Natural killer cell (primary cell): ENCODE measurements at regions of chr7 and their contacts with region 1.

Region 1: DNA sequence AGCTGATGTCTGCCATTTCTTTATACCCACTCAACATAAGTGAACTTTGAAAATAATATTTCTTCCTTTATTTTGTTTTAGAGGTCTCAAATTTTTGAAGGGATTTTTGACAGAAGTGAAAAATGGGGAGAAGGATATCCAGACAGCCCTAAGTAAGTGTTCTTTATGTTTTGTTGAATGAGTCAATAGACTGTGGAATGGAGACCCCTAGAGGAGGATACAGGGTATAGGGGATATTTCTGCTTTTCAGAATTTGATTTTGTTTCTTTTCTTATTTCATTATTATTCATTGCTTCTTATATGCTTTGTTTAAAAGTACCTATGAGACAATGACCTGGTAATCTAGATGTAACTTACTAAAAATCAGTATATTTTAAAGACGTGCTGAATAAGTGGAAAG is 34.4 kb downstream of the PLEKHA8 start:
- DNase-seq: peak in 1 of 2 donors; percentile 52
- ATAC-seq: peak; percentile 57 to 69 (median 64)
- H3K4me3 ChIP-seq: no peak overlapping the region
- H3K4me3 Mint-ChIP-seq: no peak overlapping the region
- H3K27ac ChIP-seq: no peak overlapping the region
- H3K27ac Mint-ChIP-seq: no peak overlapping the region
- H3K4me1 ChIP-seq: no peaks in the 10 kb centered on the region
- H3K4me1 Mint-ChIP-seq: peaks cover 0 to 10% of the 10 kb centered on the region in 2 donors
- H3K27me3 ChIP-seq: no peaks in the 10 kb centered on the region
- H3K27me3 Mint-ChIP-seq: no peaks in the 10 kb centered on the region
- CTCF ChIP-seq: peak; percentile 61

Region 2: DNA sequence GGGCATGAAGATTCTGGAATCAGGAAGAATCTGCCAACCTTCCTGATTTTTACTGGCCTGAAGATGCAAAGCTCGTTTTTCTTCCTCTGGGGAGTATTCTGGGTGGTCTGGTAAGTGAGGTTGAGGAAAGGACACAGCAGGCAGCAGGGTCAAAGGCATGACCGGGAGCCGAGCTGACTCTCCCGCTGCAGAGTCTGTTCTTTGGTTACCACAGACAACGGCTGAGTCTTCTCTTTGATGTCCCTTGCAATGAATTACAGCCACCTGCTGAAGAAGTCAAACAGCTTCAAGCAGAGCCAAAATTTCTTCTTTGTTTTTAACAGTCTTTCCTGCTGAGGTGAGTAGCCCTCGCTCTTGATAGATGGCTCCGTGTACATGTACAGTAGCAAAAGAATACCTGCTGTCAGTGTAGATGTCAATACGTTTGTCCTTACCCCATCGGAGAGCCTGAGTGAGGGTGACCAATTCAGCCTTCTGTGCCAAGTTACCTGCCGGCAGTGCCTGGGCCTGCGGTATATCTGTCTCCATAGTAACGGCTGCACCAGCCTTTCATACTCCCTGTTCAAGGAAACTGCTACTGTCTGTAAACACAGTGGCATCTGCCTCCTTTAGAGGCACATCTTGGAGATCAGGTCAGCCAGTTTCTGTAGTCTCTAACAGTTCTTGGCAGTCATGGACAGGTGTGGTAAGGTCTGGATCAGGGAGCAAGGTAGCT is 422.6 kb before region 1 on chr7:
- intact Hi-C with region 1: loop called (anchors 5 kb)
- DNase-seq: no peak
- ATAC-seq: no peak
- H3K4me3 ChIP-seq: no peak overlapping the region
- H3K4me3 Mint-ChIP-seq: no peak overlapping the region
- H3K27ac ChIP-seq: no peak overlapping the region
- H3K27ac Mint-ChIP-seq: no peak overlapping the region
- H3K4me1 ChIP-seq: no peaks in the 10 kb centered on the region
- H3K4me1 Mint-ChIP-seq: no peaks in the 10 kb centered on the region
- H3K27me3 ChIP-seq: no peaks in the 10 kb centered on the region
- H3K27me3 Mint-ChIP-seq: no peaks in the 10 kb centered on the region
- CTCF ChIP-seq: no peak

Region 3: DNA sequence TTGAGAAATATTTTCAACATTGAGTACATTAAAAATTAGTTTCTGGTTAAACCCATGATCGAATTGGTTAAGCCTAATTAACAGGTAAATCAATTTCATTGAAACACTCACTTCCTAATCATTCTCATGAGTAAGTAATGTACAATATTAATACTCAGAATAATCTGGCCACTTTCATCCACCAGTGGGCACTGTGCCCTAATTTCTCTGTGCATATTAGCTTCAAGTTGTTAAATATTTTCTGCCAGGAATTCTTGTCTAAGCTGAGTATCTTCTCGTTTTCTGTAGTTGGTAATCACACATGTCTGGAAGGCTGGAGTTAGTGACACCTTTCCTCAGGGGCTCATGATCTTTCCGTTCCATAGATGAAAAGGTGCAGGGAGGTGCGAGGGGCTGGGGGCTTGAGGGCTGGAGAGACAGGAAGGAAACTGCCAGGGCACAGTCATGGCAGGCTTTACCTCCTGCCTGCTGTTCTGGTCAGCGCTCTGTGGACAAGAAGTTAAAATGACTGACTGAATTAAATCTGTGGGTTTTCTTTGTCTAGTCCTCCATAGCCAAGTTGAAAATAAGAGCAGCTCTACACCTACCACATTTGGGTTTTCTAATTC is 184.4 kb before region 1 on chr7:
- intact Hi-C with region 1: loop called (anchors 1 kb)
- DNase-seq: peak in 1 of 2 donors; percentile 59
- ATAC-seq: peak in 1 of 3 donors; percentile 70
- H3K4me3 ChIP-seq: no peak overlapping the region
- H3K4me3 Mint-ChIP-seq: no peak overlapping the region
- H3K27ac ChIP-seq: no peak overlapping the region
- H3K27ac Mint-ChIP-seq: no peak overlapping the region
- H3K4me1 ChIP-seq: no peaks in the 10 kb centered on the region
- H3K4me1 Mint-ChIP-seq: peaks cover 5 to 13% of the 10 kb centered on the region in 2 donors
- H3K27me3 ChIP-seq: no peaks in the 10 kb centered on the region
- H3K27me3 Mint-ChIP-seq: peaks cover 17 to 33% of the 10 kb centered on the region in 2 donors
- CTCF ChIP-seq: peak; percentile 66

Region 4: DNA sequence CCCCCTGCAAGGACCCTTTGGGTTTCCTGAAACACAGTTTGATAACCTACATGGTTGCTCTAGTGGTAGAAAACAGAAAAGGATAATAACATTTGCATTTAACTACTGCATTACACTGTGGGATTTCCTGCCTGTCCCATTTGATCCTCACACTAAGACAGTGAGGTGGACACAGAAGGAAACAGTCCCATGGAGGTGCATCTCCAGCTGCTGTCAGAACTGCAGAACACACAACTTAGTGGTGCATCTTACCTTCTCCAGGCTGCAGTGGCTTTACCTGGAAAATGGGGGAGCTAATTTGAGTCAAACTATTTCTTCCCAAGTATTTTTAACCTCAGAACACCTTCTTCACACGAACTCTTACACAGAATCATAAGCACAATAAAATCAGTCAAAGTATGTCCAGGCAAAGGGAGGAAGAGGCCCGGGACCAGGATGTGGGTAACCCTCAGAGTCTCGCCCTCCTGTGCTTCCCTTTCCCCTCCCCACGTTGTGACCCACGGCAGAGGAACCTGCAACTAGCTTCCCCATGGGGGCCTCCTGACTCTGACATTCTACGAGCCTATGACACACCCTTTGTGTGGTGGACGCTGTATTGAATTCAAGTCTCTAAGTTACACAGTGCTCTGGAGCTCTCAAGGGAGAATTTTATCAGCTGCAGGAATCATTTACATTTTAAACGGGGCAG is 106.6 kb before region 1 on chr7:
- intact Hi-C with region 1: loop called (anchors 10 kb)
- DNase-seq: peak in 1 of 2 donors; percentile 14
- ATAC-seq: peak; percentile 72 to 85 (median 84)
- H3K4me3 ChIP-seq: no peak overlapping the region
- H3K4me3 Mint-ChIP-seq: peak overlapping the region; percentile 57
- H3K27ac ChIP-seq: no peak overlapping the region
- H3K27ac Mint-ChIP-seq: peak overlapping the region; percentile 47 to 61
- H3K4me1 ChIP-seq: peaks cover 16% of the 10 kb centered on the region
- H3K4me1 Mint-ChIP-seq: peaks cover 50 to 58% of the 10 kb centered on the region in 2 donors
- H3K27me3 ChIP-seq: no peaks in the 10 kb centered on the region
- H3K27me3 Mint-ChIP-seq: no peaks in the 10 kb centered on the region
- CTCF ChIP-seq: no peak

Region 5: DNA sequence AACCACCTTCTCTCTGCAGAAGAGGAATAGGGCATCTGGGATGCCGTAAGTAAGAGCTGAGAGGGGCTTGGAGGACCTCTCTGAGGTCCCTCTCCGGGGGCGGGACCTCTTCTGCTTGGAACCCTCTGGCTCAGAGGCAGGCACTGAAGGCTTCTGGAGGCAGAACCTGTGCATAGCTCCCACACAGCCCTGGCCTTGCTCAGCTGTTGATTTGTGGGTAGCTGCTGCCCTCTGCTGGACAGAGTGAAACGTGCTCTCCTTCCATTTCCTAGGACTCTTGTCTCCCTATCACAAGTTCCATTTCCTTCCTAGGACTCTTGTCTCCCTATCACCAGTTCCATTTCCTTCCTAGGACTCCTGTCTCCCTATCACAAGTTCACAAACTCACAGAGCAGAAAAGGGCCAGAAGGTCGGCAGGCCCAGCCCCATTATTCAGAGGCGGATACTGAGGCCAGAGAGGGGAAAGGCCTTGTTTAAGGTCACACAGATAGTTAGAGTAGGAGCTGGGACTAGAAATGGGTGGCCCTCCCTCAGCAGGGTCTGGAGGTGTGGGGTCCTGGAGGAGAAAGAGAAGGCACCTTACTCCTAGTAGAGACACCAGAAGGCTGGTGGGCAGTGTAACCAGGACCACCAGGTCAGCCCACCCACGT is 501.8 kb after region 1 on chr7:
- intact Hi-C with region 1: loop called (anchors 5 kb)
- DNase-seq: peak; percentile 70 to 88
- ATAC-seq: peak; percentile 88 to 99 (median 97)
- H3K4me3 ChIP-seq: no peak overlapping the region
- H3K4me3 Mint-ChIP-seq: no peak overlapping the region
- H3K27ac ChIP-seq: no peak overlapping the region
- H3K27ac Mint-ChIP-seq: peak overlapping the region in 1 of 2 donors; percentile 68
- H3K4me1 ChIP-seq: no peaks in the 10 kb centered on the region
- H3K4me1 Mint-ChIP-seq: peaks cover 0 to 7% of the 10 kb centered on the region in 2 donors
- H3K27me3 ChIP-seq: no peaks in the 10 kb centered on the region
- H3K27me3 Mint-ChIP-seq: no peaks in the 10 kb centered on the region
- CTCF ChIP-seq: peak; percentile 88